ENCODE measurements at regions of chr1 and their contacts with region 1.

Region 1: DNA sequence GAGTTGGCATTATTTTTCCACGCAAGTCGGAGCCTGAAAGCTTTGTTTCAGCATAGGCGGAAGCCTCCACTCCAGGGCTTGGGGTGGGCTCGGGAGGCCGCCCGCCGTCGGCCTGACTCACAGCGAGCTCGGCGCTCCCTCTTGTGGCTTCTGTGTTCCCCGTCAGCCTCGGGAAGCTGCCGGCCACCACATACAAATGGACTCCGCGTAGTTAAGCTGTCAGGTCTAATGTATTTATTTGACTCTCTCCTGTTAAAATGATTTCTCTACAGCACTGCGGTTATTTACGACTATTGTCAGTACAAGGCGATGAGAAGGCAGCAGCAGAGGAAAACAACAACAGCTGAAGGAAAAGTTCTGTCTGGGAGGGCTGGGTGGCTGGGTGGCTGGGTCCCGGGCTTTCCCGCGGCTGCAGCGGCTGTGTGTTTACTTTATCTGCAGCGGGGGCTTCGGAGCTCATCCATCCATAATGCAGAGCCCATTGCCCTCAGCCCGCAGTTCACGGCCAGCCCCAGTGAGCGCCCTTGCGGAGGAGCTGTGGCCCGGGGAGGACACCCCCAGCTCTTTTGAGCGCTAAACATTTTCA is 375.7 kb upstream of the CAMK1G start:
- DNase-seq: peak; percentile 83
- ATAC-seq: peak; percentile 91
- H3K4me3 Mint-ChIP-seq: peak overlapping the region; percentile 65
- H3K27ac Mint-ChIP-seq: no peak overlapping the region
- H3K4me1 Mint-ChIP-seq: peaks cover 24% of the 10 kb centered on the region
- H3K27me3 Mint-ChIP-seq: peaks cover 9% of the 10 kb centered on the region
- CTCF ChIP-seq: peak; percentile 50; the same call in 1 of the 2 replicates

Region 2: GRCh38 chr1:208747979-208748378 is 459.8 kb before region 1 on chr1:
- CTCF ChIA-PET with region 1: no interaction called
- POLR2A ChIA-PET with region 1: no interaction called
- DNase-seq: no peak
- ATAC-seq: no peak
- H3K4me3 Mint-ChIP-seq: no peak overlapping the region
- H3K27ac Mint-ChIP-seq: no peak overlapping the region
- H3K4me1 Mint-ChIP-seq: peaks cover 7% of the 10 kb centered on the region; the same call in 1 of the 2 replicates
- H3K27me3 Mint-ChIP-seq: no peaks in the 10 kb centered on the region
- CTCF ChIP-seq: no peak

Region 3: GRCh38 chr1:209048941-209049669 is 158.7 kb before region 1 on chr1:
- CTCF ChIA-PET with region 1: interaction called, 10 read pairs
- POLR2A ChIA-PET with region 1: no interaction called
- DNase-seq: no peak
- ATAC-seq: no peak
- H3K4me3 Mint-ChIP-seq: no peak overlapping the region
- H3K27ac Mint-ChIP-seq: no peak overlapping the region
- H3K4me1 Mint-ChIP-seq: peaks cover 5% of the 10 kb centered on the region; the same call in 1 of the 2 replicates
- H3K27me3 Mint-ChIP-seq: peaks cover 59% of the 10 kb centered on the region
- CTCF ChIP-seq: no peak

Region 4: DNA sequence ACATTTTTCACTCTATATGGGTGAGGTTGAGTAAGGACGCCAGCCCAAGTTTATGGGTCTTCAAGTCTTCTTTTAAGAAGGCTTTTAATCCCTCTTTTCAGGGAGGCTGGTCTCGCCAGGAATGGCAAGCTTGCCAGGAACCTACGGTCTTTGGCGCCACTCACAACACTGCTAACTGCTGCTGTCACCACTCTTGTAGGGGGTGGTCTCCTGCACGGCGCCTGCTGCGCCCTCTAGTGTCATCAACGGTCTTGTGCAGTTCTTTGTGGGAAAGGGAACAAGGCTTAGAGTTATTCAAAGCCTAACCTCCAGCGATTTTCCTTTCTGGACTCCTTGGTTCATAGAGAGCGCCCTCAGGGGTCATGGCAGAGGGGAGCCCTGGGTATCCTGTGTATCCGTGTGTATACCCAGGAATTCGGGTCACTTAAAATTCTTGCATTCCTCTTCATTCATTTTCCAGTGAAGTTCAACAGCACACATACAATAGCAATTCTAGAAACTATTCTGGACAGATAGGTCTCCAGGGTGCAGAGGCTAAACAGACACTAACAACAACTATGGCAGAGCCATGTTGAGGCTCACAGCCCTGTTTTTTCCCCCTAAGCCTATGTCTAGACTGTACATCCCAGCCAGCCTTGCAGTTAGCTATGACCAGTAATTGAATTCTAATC is 17.1 kb before region 1 on chr1:
- CTCF ChIA-PET with region 1: interaction called, 14 read pairs
- POLR2A ChIA-PET with region 1: no interaction called
- DNase-seq: peak; percentile 86
- ATAC-seq: peak; percentile 100
- H3K4me3 Mint-ChIP-seq: no peak overlapping the region
- H3K27ac Mint-ChIP-seq: no peak overlapping the region
- H3K4me1 Mint-ChIP-seq: peaks cover 26% of the 10 kb centered on the region
- H3K27me3 Mint-ChIP-seq: no peaks in the 10 kb centered on the region
- CTCF ChIP-seq: peak; percentile 83

Region 5: GRCh38 chr1:209248649-209249279 is 41.0 kb after region 1 on chr1:
- CTCF ChIA-PET with region 1: interaction called, 45 read pairs
- POLR2A ChIA-PET with region 1: no interaction called
- DNase-seq: peak; percentile 62
- ATAC-seq: peak; percentile 88
- H3K4me3 Mint-ChIP-seq: no peak overlapping the region
- H3K27ac Mint-ChIP-seq: peak overlapping the region; percentile 81
- H3K4me1 Mint-ChIP-seq: peaks cover 41% of the 10 kb centered on the region
- H3K27me3 Mint-ChIP-seq: no peaks in the 10 kb centered on the region
- CTCF ChIP-seq: peak; percentile 86

Region 6: DNA sequence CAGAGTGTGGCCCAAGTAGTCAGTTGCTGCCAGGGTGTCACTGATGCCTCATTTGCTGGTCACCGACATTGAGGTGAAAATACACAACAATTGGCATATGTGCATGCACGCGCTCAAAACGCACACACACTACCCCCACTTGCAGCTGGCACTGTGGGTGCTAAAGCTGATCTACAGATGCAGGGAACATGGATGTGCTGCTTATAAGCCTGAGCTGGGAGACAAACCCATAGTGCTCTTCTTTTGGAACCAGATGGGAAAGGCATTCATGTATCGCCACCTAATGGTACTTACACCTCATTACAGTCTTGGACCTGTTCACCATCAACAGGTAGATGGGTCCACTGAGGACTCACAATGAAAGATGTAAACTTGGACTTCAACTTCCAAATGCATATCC is 305.4 kb after region 1 on chr1:
- CTCF ChIA-PET with region 1: interaction called, 35 read pairs
- POLR2A ChIA-PET with region 1: no interaction called
- DNase-seq: no peak
- ATAC-seq: peak; percentile 95
- H3K4me3 Mint-ChIP-seq: no peak overlapping the region
- H3K27ac Mint-ChIP-seq: no peak overlapping the region
- H3K4me1 Mint-ChIP-seq: peaks cover 17% of the 10 kb centered on the region
- H3K27me3 Mint-ChIP-seq: no peaks in the 10 kb centered on the region
- CTCF ChIP-seq: peak; percentile 63